Heart right ventricle (tissue), 16 donors: ENCODE measurements at regions of chr2 and their contacts with region 1.

Region 1: GRCh38 chr2:100887713-100888495 is 68.0 kb downstream of the NPAS2 start:
- DNase-seq: no peak
- ATAC-seq: peak in 7 of 8 donors; percentile 17 to 51 (median 36)
- H3K4me3 ChIP-seq: no peak overlapping the region
- H3K27ac ChIP-seq: peak overlapping the region in 5 of 10 donors; percentile 14 to 51 (median 33)
- H3K4me1 ChIP-seq: peaks cover 9 to 70% (median 33%) of the 10 kb centered on the region in 9 donors
- H3K27me3 ChIP-seq: no peaks in the 10 kb centered on the region
- CTCF ChIP-seq: no peak

Region 2: DNA sequence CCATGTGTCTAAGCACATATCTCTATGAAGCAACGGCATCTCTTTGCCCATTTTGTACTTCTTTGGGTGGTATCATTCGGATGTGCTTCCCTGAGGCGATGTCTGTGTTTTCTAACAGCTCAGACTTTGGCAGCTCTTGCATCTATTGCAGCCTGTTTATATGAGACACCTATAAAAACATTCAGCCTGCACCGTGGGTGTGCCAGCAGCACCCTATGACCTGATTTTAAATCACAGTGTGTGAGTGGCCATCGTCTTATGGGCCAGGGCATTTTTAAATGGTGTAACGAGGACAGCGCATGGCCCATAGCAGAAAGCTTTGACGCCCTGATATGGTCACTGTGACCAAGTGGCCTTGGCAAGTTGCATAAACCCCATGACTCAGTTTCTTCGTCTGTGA is 55.0 kb before region 1 on chr2:
- intact Hi-C with region 1: loop called in 1 of 10 experiments (anchors 5 kb)
- DNase-seq: no peak
- ATAC-seq: peak in 7 of 8 donors; percentile 42 to 77 (median 48)
- H3K4me3 ChIP-seq: no peak overlapping the region
- H3K27ac ChIP-seq: peak overlapping the region in 5 of 10 donors; percentile 15 to 49 (median 33)
- H3K4me1 ChIP-seq: peaks cover 12 to 56% (median 32%) of the 10 kb centered on the region in 9 donors
- H3K27me3 ChIP-seq: no peaks in the 10 kb centered on the region
- CTCF ChIP-seq: no peak